ENCODE measurements at regions of chr16 and their contacts with region 1.

Region 1: GRCh38 chr16:15874745-15875314 is 13.6 kb downstream of the CEP20 start:
- DNase-seq: peak; percentile 84
- H3K4me3 ChIP-seq: no peak overlapping the region
- H3K27ac ChIP-seq: no peak overlapping the region
- H3K4me1 ChIP-seq: peaks cover 9% of the 10 kb centered on the region
- H3K27me3 ChIP-seq: no peaks in the 10 kb centered on the region
- CTCF ChIP-seq: peak; percentile 83 to 87
- POLR2A ChIP-seq: no peak

Region 2: GRCh38 chr16:15822957-15823356 is 51.9 kb before region 1 on chr16:
- CTCF ChIA-PET with region 1: interaction called, 15 read pairs
- POLR2A ChIA-PET with region 1: no interaction called
- dilution Hi-C with region 1: no loop called
- intact Hi-C with region 1: no loop called
- DNase-seq: no peak
- H3K4me3 ChIP-seq: no peak overlapping the region
- H3K27ac ChIP-seq: no peak overlapping the region
- H3K4me1 ChIP-seq: no peaks in the 10 kb centered on the region
- H3K27me3 ChIP-seq: peaks cover 0 to 2% of the 10 kb centered on the region in 2 experiments
- CTCF ChIP-seq: no peak
- POLR2A ChIP-seq: no peak

Region 3: DNA sequence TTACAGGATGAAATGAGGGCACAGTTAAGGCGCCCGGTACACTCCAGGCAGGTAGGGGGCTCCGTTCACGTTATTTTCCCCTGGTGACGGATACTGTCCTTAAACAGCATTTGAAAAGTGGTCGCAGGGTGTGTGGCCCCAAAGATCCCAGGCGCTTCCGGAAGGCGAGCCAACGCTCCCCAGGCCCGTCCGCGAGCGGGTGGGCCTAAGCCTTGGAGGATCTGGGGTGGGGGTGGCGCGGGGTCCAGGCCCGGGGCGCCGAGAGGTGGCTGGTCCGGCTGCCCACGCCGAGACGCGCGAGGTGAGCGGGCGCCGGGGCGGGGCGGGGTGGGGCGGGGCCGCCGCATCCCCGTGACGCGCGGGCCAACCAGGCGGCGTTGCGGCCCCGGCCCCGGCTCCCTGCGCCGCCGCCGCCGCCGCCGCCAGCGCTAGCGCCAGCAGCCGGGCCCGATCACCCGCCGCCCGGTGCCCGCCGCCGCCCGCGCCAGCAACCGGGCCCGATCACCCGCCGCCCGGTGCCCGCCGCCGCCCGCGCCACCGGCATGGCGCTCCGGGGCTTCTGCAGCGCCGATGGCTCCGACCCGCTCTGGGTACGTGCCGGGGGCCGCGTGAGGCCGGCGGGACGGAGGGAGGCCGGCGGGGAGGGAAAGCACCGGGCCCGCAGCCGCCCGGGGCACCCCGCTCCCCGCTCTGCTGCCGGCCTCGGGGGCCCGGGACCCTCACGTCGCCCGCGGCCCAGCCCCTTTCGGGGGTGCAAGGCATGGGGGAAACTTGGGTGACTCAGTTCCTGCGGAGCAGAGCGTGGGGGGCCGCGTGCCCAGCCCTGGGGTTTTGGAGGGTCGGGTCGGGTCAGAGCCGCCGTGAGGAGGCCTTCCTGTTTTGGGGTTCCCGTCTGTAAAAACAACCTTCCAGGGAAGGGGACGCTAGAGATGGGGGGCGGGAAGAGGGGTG is 74.7 kb after region 1 on chr16 and contains the start of gene ABCC1:
- CTCF ChIA-PET with region 1: interaction called, 25 read pairs
- POLR2A ChIA-PET with region 1: no interaction called
- dilution Hi-C with region 1: no loop called
- intact Hi-C with region 1: no loop called
- DNase-seq: peak; percentile 39
- H3K4me3 ChIP-seq: peak within 1 kb of the TSS; percentile 77 to 98 (median 95)
- H3K27ac ChIP-seq: peak within 1 kb of the TSS; percentile 88
- H3K4me1 ChIP-seq: peaks cover 30% of the 10 kb centered on the region
- H3K27me3 ChIP-seq: no peaks in the 10 kb centered on the region
- CTCF ChIP-seq: no peak
- POLR2A ChIP-seq: peak; percentile 30
- total RNA-seq, gene ABCC1: 71.4 and 89.2 TPM in 2 replicates

Region 4: DNA sequence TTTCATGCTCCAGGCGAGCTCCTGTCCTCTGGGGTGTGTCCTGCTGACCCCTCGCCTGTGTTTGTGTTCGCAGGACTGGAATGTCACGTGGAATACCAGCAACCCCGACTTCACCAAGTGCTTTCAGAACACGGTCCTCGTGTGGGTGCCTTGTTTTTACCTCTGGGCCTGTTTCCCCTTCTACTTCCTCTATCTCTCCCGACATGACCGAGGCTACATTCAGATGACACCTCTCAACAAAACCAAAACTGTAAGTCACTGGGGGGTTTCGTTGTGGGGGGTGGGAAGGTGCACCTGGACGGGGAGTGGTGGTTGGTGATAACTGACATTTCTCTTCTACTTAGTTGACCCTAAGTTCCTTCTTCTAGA is 132.9 kb after region 1 on chr16:
- CTCF ChIA-PET with region 1: interaction called, 13 read pairs
- POLR2A ChIA-PET with region 1: no interaction called
- dilution Hi-C with region 1: no loop called
- intact Hi-C with region 1: no loop called
- DNase-seq: no peak
- H3K4me3 ChIP-seq: no peak overlapping the region
- H3K27ac ChIP-seq: no peak overlapping the region
- H3K4me1 ChIP-seq: peaks cover 18% of the 10 kb centered on the region
- H3K27me3 ChIP-seq: no peaks in the 10 kb centered on the region
- CTCF ChIP-seq: no peak
- POLR2A ChIP-seq: no peak

Region 5: DNA sequence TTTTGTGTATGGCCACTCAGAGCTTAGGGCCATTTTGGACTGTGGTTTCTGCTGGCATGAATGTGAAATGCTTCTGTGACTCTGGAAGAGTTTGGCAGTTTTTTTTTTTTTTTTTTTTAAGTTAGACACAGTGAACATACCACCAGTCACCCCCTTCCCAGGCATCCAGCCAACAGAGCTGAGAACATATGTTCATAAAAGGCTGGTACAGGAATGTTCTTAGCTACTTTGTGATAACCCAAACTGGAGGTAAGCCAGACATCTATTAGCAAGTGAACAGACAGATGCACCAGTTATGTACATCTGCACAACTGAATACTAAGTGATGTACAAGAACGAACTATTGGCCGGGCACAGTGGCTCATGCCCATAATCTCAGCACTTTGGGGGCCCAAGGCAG is 167.2 kb after region 1 on chr16:
- CTCF ChIA-PET with region 1: interaction called, 18 read pairs
- POLR2A ChIA-PET with region 1: interaction called, 5 read pairs
- dilution Hi-C with region 1: no loop called
- intact Hi-C with region 1: no loop called
- DNase-seq: peak; percentile 54
- H3K4me3 ChIP-seq: no peak overlapping the region
- H3K27ac ChIP-seq: no peak overlapping the region
- H3K4me1 ChIP-seq: peaks cover 10% of the 10 kb centered on the region
- H3K27me3 ChIP-seq: no peaks in the 10 kb centered on the region
- CTCF ChIP-seq: no peak
- POLR2A ChIP-seq: no peak

Region 6: DNA sequence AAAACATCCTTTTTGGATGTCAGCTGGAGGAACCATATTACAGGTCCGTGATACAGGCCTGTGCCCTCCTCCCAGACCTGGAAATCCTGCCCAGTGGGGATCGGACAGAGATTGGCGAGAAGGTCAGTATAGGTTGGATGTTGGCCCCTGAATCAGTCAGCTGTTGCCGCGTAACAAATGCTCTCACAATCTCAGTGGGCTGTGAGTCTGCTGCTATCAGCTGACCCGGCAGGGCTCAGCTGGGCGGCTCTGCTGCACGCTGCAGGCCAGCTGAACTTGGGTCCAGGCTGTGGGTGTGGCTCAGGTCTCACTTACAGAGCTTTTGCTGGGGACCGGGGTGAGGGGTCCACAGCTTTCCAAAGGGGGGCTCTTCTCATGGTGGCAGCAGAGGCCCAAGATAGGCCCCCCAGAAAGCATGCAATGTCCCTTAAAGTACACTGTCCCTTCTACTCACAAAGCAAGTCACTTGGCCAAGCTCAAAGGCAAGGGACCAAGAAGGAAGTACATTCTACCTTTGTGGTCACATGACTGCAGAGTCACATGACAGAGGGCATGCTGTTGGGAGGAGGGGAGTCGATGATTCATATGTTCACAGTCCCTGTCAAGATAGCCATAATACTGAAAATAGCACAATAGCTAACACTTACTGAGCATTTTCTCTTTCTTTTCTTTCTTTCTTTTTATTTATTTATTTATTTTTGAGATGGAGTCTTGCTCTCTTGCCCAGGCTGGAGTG is 208.8 kb after region 1 on chr16:
- CTCF ChIA-PET with region 1: interaction called, 13 read pairs
- POLR2A ChIA-PET with region 1: no interaction called
- dilution Hi-C with region 1: no loop called
- intact Hi-C with region 1: no loop called
- DNase-seq: no peak
- H3K4me3 ChIP-seq: no peak overlapping the region
- H3K27ac ChIP-seq: no peak overlapping the region
- H3K4me1 ChIP-seq: no peaks in the 10 kb centered on the region
- H3K27me3 ChIP-seq: no peaks in the 10 kb centered on the region
- CTCF ChIP-seq: no peak
- POLR2A ChIP-seq: no peak

Region 7: GRCh38 chr16:16191493-16192167 is 316.8 kb after region 1 on chr16:
- CTCF ChIA-PET with region 1: interaction called, 3 read pairs
- POLR2A ChIA-PET with region 1: no interaction called
- dilution Hi-C with region 1: no loop called
- intact Hi-C with region 1: loop called (anchors 10 kb)
- DNase-seq: peak; percentile 77
- H3K4me3 ChIP-seq: no peak overlapping the region
- H3K27ac ChIP-seq: no peak overlapping the region
- H3K4me1 ChIP-seq: no peaks in the 10 kb centered on the region
- H3K27me3 ChIP-seq: peaks cover 0 to 1% of the 10 kb centered on the region in 2 experiments
- CTCF ChIP-seq: no peak
- POLR2A ChIP-seq: no peak

Measured in endothelial cell of umbilical vein (primary cell).